Heart right ventricle (tissue), 16 donors: ENCODE measurements at regions of chr1 and their contacts with region 1.

Region 1: DNA sequence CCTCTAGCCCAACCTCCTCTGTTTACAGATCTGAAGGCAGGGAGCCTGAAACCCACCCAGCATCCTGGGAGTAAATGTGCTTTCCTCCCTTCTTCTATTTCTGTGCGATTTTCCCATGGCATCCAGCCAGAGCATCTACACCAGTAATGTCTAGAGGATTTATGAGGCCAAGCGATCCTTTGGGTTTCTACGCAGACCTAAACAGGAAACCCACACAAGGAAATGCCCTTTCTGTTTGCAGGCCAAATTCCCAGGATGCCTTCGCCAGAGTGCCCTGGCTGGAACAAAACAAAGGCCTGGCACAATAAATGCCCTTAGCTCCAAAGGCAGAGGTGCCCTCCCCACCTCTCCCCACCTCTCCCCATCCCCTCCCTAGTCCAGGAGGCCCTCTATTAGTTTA is 110.5 kb upstream of the CDC42BPA start:
- DNase-seq: peak in 1 of 2 donors; percentile 62
- ATAC-seq: peak; percentile 31 to 67 (median 51)
- H3K4me3 ChIP-seq: no peak overlapping the region
- H3K27ac ChIP-seq: peak overlapping the region; percentile 10 to 78 (median 52)
- H3K4me1 ChIP-seq: peaks cover 3 to 52% (median 32%) of the 10 kb centered on the region in 9 donors
- H3K27me3 ChIP-seq: no peaks in the 10 kb centered on the region
- CTCF ChIP-seq: no peak

Region 2: GRCh38 chr1:227357171-227357880 is 71.5 kb before region 1 on chr1:
- intact Hi-C with region 1: loop called in 1 of 10 experiments (anchors 5 kb)
- DNase-seq: peak; percentile 47 to 84
- ATAC-seq: peak; percentile 94 to 99 (median 98)
- H3K4me3 ChIP-seq: no peak overlapping the region
- H3K27ac ChIP-seq: peak overlapping the region; percentile 31 to 91 (median 74)
- H3K4me1 ChIP-seq: peaks cover 4 to 34% (median 23%) of the 10 kb centered on the region in 9 donors
- H3K27me3 ChIP-seq: no peaks in the 10 kb centered on the region
- CTCF ChIP-seq: peak in 1 of 9 donors; percentile 22

Region 3: DNA sequence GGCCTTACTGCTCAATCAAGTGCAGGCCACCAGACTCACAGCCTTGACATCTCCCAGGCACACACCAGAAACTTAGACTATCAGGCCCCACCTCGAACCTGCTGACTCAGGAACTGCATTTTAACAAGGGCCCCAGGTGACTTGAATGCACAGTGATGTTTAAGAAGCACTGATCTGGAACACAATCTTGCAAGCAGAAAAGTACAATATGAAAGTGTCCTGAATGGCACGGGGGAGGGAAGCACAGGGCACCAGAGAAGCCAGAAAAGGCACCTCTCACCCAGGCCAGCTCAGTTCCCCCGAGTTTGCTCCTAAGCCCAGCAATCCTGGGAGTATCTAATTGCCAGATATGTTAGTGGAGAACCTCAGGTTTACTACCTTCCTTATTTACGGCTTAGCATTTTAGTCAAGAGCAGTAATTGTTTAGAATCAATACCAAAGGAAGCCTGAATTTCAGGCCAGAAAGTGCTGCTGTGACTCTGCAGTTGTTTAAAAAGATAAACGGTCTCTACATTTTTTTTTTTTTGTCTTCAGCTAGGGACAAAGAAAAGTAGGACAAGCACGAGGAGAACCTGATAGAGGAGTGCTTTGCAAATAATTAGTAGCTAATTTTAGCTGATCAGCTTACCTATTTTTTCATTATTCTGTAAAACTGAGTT is 59.6 kb before region 1 on chr1:
- intact Hi-C with region 1: loop called in 1 of 10 experiments (anchors 5 kb)
- DNase-seq: no peak
- ATAC-seq: no peak
- H3K4me3 ChIP-seq: no peak overlapping the region
- H3K27ac ChIP-seq: no peak overlapping the region
- H3K4me1 ChIP-seq: peaks cover 0 to 4% (median 0%) of the 10 kb centered on the region in 9 donors
- H3K27me3 ChIP-seq: no peaks in the 10 kb centered on the region
- CTCF ChIP-seq: no peak

Region 4: GRCh38 chr1:227542143-227543120 is 113.6 kb after region 1 on chr1:
- intact Hi-C with region 1: no loop called
- DNase-seq: peak; percentile 84 to 91
- ATAC-seq: peak; percentile 95 to 97 (median 97)
- H3K4me3 ChIP-seq: peak overlapping the region; percentile 45 to 88 (median 76)
- H3K27ac ChIP-seq: peak overlapping the region; percentile 2 to 78 (median 68)
- H3K4me1 ChIP-seq: peaks cover 0 to 17% (median 12%) of the 10 kb centered on the region in 9 donors
- H3K27me3 ChIP-seq: peaks cover 0 to 7% (median 0%) of the 10 kb centered on the region in 7 donors
- CTCF ChIP-seq: peak; percentile 95 to 99 (median 99)